ENCODE measurements at regions of chr17 and their contacts with region 1.

Region 1: DNA sequence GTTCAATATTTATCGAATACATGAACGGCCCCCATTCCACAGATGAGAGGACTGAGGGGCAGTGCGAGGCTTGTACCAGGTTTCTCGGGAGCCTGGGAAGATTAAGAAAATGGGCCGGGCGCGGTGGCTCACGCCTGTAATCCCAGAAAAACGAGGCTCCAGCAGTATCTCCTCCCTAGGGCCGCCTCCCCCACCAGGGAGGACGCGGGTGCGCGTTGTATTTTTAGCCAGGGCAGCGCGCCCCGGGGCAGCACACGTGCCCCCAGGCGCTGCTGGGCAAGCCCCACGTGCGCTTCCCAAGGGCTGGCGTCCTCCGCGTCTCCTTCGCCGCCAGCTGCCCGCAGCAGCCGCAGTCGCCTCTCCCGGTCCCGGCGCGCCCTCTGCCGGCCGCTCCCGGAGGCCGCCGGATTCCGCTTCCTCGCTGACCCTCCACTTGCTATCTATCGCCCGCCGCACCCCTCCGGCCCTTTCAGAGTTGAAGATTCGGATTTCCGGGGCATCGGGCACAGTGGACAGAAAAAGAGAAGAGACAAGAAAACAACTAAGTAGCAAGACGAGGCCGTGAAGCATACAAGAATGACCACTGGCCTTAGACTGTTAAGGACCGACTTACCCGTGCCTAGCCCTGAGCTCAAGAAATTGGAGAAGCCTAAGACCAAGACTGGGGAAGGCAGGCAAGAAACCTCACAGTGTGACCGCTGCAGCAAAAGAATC is 1.9 kb upstream of the YBX2 start:
- DNase-seq: peak; percentile 94
- ATAC-seq: peak; percentile 27
- H3K4me3 Mint-ChIP-seq: peak overlapping the region; percentile 70
- H3K27ac Mint-ChIP-seq: no peak overlapping the region
- H3K4me1 Mint-ChIP-seq: peaks cover 23% of the 10 kb centered on the region
- H3K27me3 Mint-ChIP-seq: peaks cover 76% of the 10 kb centered on the region
- CTCF ChIP-seq: peak; percentile 90; the same call in 1 of the 2 replicates

Region 2: DNA sequence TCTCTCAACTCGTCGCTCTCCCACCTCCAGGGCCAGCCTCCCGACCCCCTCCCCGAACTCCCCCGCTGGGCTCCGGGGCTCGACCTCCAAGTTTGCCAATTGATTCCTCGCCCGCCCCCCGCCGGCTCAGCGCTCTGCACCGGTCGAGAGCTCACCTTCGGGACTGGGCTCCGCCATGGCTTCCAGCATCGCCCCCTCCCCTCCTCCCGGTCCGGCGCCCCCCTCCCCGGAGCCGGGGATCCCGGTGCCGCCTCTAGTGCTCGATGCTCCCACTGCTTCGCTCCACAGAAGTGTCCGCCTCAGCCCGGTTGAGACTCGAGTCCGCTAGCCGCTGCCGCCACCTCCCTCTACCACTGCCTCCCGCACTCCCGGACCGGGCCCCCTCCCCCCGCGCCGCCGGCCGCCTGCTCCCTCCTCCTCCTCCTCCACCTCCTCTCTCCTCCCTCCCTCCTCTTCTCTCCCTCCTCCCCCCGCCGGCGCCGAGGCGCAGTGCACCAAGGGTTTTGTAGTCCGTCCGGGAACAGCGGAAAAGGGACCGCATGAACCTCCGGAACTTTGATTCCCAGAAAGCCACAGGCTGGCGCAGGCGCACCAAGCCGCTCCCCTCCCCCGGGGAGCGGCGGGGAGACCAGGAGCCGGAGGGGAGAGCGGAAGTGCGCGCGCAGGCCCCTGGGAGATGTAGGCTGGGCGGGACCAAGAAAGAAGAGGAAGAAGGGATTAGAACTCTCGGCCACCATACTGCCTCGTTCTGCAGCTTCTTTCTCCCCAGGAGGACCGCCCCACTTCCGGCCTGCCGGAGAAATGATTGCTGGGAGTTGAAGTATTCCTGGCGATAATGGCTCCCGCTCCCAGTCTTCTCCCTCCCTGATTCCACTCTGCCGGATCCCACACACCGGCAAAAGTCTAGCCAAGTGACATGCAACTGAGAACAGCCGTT is 57.0 kb before region 1 on chr17 and contains the start of gene PHF23:
- CTCF ChIA-PET with region 1: interaction called, 10 read pairs
- POLR2A ChIA-PET with region 1: interaction called, 3 read pairs
- DNase-seq: peak; percentile 99
- ATAC-seq: peak; percentile 73
- H3K4me3 Mint-ChIP-seq: peak within 1 kb of the TSS; percentile 95
- H3K27ac Mint-ChIP-seq: peak within 1 kb of the TSS; percentile 93
- H3K4me1 Mint-ChIP-seq: peaks cover 39% of the 10 kb centered on the region
- H3K27me3 Mint-ChIP-seq: no peaks in the 10 kb centered on the region
- CTCF ChIP-seq: no peak
- total RNA-seq, gene PHF23: 45.8 to 50.1 TPM (median 49.1 TPM) in 3 replicates

Region 3: DNA sequence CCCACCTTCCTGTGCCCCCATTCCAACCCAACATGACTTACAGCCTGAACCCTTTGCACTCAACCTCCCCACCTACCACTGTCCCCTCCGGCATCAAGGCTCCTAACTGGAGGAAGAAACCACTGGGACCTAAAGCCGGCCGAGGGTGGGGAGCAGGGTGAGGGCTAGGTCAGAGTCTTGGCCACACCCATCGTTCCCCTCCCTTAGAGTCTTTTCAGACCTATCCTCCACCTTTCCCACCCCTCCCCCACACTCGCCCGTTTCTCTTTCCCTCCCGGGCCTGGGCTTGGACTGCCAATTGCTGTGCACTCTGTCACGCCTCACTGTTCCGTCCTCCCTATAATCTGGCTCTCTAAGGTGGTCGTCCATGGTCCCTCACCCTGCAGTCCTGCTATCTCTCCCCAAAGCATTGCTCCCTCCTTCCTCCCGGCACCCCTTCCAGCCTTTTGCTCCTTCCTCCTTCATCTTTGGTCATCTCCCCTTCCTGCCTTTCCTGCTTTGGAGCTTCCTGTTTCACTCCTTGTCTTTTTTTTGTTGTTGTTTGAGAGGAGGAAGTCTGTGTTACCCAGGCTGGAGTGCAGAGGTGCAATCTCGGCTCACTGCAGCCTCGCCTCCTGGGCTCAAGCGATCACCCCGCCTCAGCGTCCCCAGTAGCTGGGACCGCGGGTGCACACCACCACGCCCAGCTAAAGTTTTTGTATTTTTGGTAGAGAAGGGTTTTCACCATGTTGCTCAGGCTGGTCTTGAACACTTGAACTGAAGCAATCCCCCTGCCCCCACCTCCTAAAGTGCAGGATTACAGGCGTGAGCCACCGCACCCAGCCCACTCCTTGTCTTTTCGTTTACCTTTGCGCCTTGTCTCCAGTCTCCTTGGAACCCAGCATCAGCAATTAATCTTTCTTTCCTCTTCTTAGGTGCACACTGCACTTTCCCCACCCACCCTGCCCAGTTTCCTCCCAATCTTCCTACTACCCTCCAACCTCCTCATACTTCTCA is 33.0 kb before region 1 on chr17:
- CTCF ChIA-PET with region 1: interaction called, 23 read pairs
- POLR2A ChIA-PET with region 1: interaction called, 3 read pairs
- DNase-seq: peak; percentile 93
- ATAC-seq: peak; percentile 65
- H3K4me3 Mint-ChIP-seq: peak overlapping the region; percentile 98
- H3K27ac Mint-ChIP-seq: peak overlapping the region; percentile 100
- H3K4me1 Mint-ChIP-seq: peaks cover 26% of the 10 kb centered on the region
- H3K27me3 Mint-ChIP-seq: no peaks in the 10 kb centered on the region
- CTCF ChIP-seq: no peak